Left ventricle myocardium inferior (tissue), 1 donor: ENCODE measurements at regions of chr5 and their contacts with region 1.

Region 1: DNA sequence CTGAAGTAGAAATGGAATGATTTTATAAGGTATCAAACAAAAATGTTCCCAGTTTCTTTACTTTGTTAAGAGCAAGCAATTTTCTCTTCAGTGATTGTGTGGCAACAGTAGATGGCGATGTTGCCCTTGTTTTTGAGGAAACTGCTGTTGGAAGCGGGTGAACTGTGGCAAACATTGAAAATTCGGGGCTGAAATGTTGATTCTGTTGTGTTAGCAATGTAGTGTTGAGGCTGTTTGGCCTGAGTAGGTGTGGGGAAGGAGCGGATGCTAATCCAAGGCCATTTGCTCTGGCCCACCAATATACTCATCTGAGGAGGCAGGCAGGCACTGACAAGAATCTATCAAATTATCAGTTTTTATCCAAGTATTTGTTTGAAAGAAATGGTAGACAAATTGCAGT is 129.8 kb downstream of the SLC12A2 start:
- DNase-seq: no peak
- H3K4me3 ChIP-seq: no peak overlapping the region
- H3K27ac ChIP-seq: no peak overlapping the region
- H3K4me1 ChIP-seq: peaks cover 13% of the 10 kb centered on the region
- H3K27me3 ChIP-seq: no peaks in the 10 kb centered on the region
- CTCF ChIP-seq: peak; percentile 84

Region 2: GRCh38 chr5:128328446-128328845 is 115.1 kb after region 1 on chr5:
- intact Hi-C with region 1: no loop called
- DNase-seq: no peak
- H3K4me3 ChIP-seq: no peak overlapping the region
- H3K27ac ChIP-seq: peak overlapping the region; percentile 39
- H3K4me1 ChIP-seq: peaks cover 19% of the 10 kb centered on the region
- H3K27me3 ChIP-seq: no peaks in the 10 kb centered on the region
- CTCF ChIP-seq: no peak

Region 3: GRCh38 chr5:128498844-128499455 is 285.6 kb after region 1 on chr5:
- intact Hi-C with region 1: loop called (anchors 5 kb)
- DNase-seq: no peak
- H3K4me3 ChIP-seq: no peak overlapping the region
- H3K27ac ChIP-seq: no peak overlapping the region
- H3K4me1 ChIP-seq: peaks cover 15% of the 10 kb centered on the region
- H3K27me3 ChIP-seq: no peaks in the 10 kb centered on the region
- CTCF ChIP-seq: peak; percentile 66

Region 4: GRCh38 chr5:128674825-128675446 is 461.6 kb after region 1 on chr5:
- intact Hi-C with region 1: loop called (anchors 10 kb)
- DNase-seq: no peak
- H3K4me3 ChIP-seq: no peak overlapping the region
- H3K27ac ChIP-seq: no peak overlapping the region
- H3K4me1 ChIP-seq: no peaks in the 10 kb centered on the region
- H3K27me3 ChIP-seq: no peaks in the 10 kb centered on the region
- CTCF ChIP-seq: peak; percentile 65

Region 5: GRCh38 chr5:128844354-128844923 is 631.1 kb after region 1 on chr5:
- intact Hi-C with region 1: loop called (anchors 10 kb)
- DNase-seq: no peak
- H3K4me3 ChIP-seq: no peak overlapping the region
- H3K27ac ChIP-seq: no peak overlapping the region
- H3K4me1 ChIP-seq: no peaks in the 10 kb centered on the region
- H3K27me3 ChIP-seq: no peaks in the 10 kb centered on the region
- CTCF ChIP-seq: peak; percentile 55